ENCODE measurements at regions of chr10 and their contacts with region 1.

Region 1: GRCh38 chr10:98045785-98046389 is 15.5 kb upstream of the CRTAC1 start:
- DNase-seq: peak; percentile 53
- H3K4me3 ChIP-seq: no peak overlapping the region
- H3K27ac ChIP-seq: no peak overlapping the region
- H3K4me1 ChIP-seq: no peaks in the 10 kb centered on the region
- H3K27me3 ChIP-seq: peaks cover 3 to 5% of the 10 kb centered on the region in 2 experiments
- CTCF ChIP-seq: peak; percentile 90 to 91
- POLR2A ChIP-seq: no peak

Region 2: DNA sequence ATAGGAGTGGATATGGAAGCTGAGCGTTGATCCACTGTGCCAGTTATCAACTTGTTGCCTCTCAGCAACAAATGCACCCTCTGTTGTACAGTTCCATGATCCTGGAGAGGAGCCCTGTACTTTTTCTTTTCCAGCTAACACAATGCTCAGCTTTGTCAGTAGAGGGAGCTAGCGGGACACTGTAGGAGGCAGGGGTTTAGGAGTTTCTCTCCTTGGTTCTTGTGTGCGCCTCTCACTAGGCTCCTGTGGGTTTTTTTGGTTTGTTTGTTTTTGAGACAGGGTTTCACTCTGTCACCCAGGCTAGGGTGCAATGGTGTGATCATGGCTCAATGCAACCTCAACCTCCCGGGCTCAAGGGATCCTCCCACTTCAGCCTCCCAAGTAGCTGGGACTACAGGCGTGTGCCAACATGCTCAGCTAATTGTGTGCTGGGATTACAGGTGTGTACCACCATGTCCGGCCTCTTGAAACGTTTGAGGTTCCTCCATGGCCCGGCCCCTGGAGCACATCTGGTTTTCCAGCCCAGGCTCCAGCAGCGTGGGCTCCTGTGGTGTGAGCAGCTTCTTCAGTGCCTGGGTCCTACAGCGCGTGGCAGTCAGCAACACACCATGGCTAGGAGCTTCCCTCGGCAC is 344.3 kb before region 1 on chr10:
- CTCF ChIA-PET with region 1: interaction called, 18 read pairs
- POLR2A ChIA-PET with region 1: no interaction called
- dilution Hi-C with region 1: no loop called
- intact Hi-C with region 1: no loop called
- DNase-seq: peak; percentile 70
- H3K4me3 ChIP-seq: no peak overlapping the region
- H3K27ac ChIP-seq: no peak overlapping the region
- H3K4me1 ChIP-seq: no peaks in the 10 kb centered on the region
- H3K27me3 ChIP-seq: peaks cover 2 to 6% of the 10 kb centered on the region in 2 experiments
- CTCF ChIP-seq: peak; percentile 79 to 85
- POLR2A ChIP-seq: no peak

Region 3: GRCh38 chr10:97766996-97767924 is 278.6 kb before region 1 on chr10:
- CTCF ChIA-PET with region 1: interaction called, 49 read pairs
- POLR2A ChIA-PET with region 1: no interaction called
- dilution Hi-C with region 1: no loop called
- intact Hi-C with region 1: no loop called
- DNase-seq: no peak
- H3K4me3 ChIP-seq: no peak overlapping the region
- H3K27ac ChIP-seq: no peak overlapping the region
- H3K4me1 ChIP-seq: no peaks in the 10 kb centered on the region
- H3K27me3 ChIP-seq: peaks cover 21 to 24% of the 10 kb centered on the region in 2 experiments
- CTCF ChIP-seq: no peak
- POLR2A ChIP-seq: no peak

Region 4: DNA sequence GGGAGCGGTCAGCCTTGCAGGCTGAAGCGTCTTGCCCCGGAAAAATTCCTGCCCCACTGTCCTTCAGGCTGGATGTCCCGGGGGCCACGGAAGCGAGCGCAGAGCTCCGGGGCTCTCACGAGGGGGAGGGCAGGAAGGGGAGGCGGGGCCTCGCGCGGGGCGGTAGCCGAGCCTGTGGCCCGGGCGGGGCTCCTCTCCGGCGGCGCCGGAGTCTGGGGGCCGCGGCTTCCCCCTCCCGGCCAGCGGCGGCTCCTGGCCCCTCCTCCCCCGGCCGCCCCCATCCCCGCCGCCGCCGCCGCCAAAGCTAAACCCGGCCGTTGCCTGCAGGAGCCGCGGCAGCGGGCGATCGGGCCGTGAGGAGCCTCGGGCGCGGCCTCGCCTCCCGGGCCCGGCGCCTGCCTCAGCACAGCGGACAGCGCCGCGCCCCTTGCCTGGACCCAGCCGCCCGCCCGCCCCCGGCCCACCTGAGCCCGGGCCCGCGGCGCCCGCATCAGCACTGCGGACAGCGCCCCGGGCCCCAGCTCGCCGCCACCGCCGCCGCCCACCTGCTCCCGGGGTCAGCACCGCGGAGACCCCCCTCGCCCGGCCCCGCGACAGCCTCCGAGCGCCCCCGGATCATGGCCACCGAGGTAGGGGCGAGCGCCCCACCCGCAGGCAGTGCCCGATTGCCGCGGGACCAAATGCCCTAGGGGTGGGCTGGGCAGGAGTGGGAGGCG is 196.0 kb before region 1 on chr10 and contains the start of gene GOLGA7B:
- CTCF ChIA-PET with region 1: interaction called, 10 read pairs
- POLR2A ChIA-PET with region 1: no interaction called
- dilution Hi-C with region 1: no loop called
- intact Hi-C with region 1: no loop called
- DNase-seq: peak; percentile 15
- H3K4me3 ChIP-seq: no peak within 1 kb of the TSS
- H3K27ac ChIP-seq: no peak within 1 kb of the TSS
- H3K4me1 ChIP-seq: peaks cover 2% of the 10 kb centered on the region
- H3K27me3 ChIP-seq: peaks cover 7 to 17% of the 10 kb centered on the region in 2 experiments
- CTCF ChIP-seq: no peak
- POLR2A ChIP-seq: no peak
- total RNA-seq, gene GOLGA7B: not detected in 2 replicates

Region 5: DNA sequence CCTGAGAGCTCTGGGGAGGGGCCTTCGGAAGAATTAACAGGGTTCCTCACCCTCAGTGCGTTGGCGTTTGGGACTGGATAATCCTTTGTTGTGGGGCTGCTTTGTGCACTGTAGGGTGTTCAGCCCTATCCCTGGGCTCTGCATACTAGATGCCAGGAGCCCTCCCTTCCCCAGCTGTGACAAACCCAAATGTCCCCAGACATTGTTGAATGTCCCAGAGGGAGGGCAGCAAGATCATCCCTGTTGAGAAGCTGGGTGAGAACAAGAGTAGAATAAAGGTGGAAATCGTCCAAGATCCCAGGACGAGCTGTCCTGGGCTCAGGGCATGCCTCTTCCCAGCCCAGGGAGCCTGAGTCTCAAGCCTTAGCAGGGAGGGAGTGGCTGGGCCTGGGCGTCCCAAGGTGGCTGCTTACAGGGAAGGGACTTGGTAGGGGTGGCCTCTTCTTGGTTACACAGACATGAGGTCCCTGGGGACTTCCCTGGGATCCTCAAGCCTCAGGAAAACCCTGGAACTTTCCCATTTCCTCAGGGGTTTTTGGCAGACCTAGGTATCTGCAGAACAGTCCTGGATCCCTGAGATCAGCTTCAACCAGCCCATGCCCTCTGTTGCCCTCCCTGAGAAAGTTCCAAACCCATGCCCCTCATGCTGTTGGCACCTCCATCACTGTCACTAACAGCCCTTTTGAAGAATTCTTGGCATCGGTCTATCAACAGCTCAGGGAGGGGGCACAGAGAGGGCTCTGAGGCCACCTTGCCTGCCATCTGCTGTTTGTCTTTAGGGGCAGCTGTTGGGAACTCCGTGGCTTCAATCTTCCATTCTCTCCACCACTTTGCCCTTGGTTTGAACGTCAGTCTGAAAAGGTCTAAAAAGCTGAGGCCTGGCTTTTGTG is 142.5 kb before region 1 on chr10:
- CTCF ChIA-PET with region 1: interaction called, 34 read pairs
- POLR2A ChIA-PET with region 1: no interaction called
- dilution Hi-C with region 1: no loop called
- intact Hi-C with region 1: no loop called
- DNase-seq: no peak
- H3K4me3 ChIP-seq: no peak overlapping the region
- H3K27ac ChIP-seq: no peak overlapping the region
- H3K4me1 ChIP-seq: no peaks in the 10 kb centered on the region
- H3K27me3 ChIP-seq: no peaks in the 10 kb centered on the region
- CTCF ChIP-seq: no peak
- POLR2A ChIP-seq: no peak

Region 6: DNA sequence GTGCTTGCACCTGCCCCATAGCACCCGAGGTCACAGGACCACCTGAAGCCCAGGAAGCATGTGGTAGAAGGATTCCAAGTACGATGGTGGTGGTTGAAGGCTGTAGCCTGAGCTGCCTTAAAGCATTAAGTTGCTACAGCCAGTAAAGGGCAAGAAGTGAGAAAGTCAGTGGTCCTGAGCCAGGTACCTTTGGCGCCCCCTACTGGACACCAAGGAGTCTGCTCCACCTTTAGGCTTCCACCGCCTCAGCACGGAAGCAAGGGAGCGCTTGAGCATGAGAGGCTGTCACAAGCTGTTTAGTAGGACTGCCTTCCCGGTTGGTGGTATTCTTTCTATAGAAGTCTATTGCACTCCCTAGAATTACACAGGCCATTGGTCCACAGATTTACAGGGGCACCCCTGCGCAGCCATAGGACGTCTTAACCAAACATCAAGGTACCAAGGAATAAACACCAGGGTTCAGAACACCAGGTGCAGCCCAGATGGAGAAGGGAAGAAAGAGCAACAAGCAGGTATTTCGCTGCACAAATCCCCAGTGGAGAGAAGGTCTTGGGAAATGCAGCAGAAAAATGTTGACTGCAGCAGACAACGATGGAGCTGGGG is 17.6 kb before region 1 on chr10:
- CTCF ChIA-PET with region 1: interaction called, 81 read pairs
- POLR2A ChIA-PET with region 1: no interaction called
- dilution Hi-C with region 1: no loop called
- intact Hi-C with region 1: no loop called
- DNase-seq: peak; percentile 37
- H3K4me3 ChIP-seq: no peak overlapping the region
- H3K27ac ChIP-seq: no peak overlapping the region
- H3K4me1 ChIP-seq: no peaks in the 10 kb centered on the region
- H3K27me3 ChIP-seq: peaks cover 41 to 48% of the 10 kb centered on the region in 2 experiments
- CTCF ChIP-seq: peak; percentile 72 to 81
- POLR2A ChIP-seq: no peak

Region 7: DNA sequence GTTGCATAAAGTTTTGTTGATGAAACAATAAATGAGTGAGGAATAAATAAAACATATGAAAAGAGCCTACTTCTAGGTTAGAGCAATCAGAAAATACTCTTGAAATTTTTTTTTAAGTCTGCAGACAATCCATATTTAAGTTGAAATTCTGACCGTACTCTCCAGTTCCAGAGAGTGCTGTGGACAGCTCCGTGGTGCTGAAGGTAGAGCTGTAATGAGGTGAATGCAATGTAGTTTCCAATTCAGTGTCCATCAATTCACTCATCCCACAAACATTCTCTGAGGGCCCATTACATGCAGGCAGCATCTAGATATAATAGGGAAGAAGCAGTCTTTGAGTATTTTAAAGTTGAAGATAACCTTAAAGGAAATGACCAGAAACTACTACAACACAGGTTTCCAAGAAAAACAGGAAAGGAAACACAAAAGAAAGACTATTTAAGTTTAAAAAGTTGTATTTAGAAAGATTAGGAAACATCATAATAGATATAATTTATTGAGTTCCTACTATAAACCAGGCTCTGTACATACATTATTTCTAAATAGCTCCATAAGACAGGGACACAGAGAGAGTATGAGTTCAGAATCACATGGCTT is 28.5 kb after region 1 on chr10:
- CTCF ChIA-PET with region 1: interaction called, 12 read pairs
- POLR2A ChIA-PET with region 1: no interaction called
- dilution Hi-C with region 1: no loop called
- intact Hi-C with region 1: no loop called
- DNase-seq: peak; percentile 13
- H3K4me3 ChIP-seq: no peak overlapping the region
- H3K27ac ChIP-seq: no peak overlapping the region
- H3K4me1 ChIP-seq: no peaks in the 10 kb centered on the region
- H3K27me3 ChIP-seq: no peaks in the 10 kb centered on the region
- CTCF ChIP-seq: no peak
- POLR2A ChIP-seq: no peak